PC-9 (cell line): ENCODE measurements at regions of chr6 and their contacts with region 1.

Region 1: DNA sequence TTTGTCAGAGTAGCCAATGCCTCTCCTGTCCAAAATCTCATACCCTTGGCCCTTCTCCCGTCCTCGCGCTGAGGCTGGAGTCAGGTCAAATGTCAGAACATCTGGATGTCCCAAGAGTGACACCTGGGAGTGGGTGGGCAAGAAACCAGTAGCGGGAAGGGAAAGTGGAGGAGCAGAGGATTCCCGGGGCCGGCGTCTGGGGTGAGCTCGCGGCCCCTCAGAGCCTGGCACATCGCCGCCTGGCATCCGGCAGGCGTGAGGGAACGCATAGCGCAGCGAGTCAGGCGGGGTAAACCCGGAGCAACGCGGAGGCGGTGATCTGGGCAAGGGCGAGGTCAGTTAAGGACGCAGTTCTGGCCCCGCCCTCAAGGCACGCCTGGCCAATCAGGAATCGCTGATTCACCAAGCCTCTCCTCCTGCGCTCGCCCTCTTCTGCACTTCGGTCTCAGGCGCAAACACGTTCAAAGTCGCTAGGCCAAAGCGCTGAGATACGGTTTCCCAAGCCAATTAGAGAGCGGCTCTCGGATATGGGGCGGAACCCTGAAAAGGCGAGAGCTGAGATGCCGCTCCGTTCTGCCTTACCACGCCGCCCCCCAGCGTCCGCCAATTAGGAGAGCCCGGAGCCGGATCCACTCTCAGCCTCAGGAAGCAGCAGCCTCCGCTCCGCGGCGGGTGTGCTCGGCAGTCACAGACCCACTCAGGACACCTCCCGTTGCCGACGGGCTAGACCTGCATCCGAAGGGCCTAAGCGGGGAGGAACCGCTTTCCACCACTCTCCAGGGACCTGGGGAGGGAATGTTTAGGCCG is 22.5 kb downstream of the VPS52 start:
- DNase-seq: peak; percentile 95 to 97
- H3K4me3 ChIP-seq: peak overlapping the region; percentile 69
- H3K27ac ChIP-seq: peak overlapping the region; percentile 66
- H3K4me1 ChIP-seq: peaks cover 28% of the 10 kb centered on the region
- H3K27me3 ChIP-seq: peaks cover 16% of the 10 kb centered on the region
- CTCF ChIP-seq: no peak

Region 2: GRCh38 chr6:32838114-32838958 is 410.8 kb before region 1 on chr6 and contains the start of gene TAP2:
- CTCF ChIA-PET with region 1: interaction called, 11 read pairs
- POLR2A ChIA-PET with region 1: no interaction called
- intact Hi-C with region 1: loop called (anchors 1 kb)
- DNase-seq: peak; percentile 79 to 96
- H3K4me3 ChIP-seq: peak within 1 kb of the TSS; percentile 68
- H3K27ac ChIP-seq: peak within 1 kb of the TSS; percentile 21; the same call in 1 of the 2 replicates
- H3K4me1 ChIP-seq: peaks cover 13% of the 10 kb centered on the region
- H3K27me3 ChIP-seq: no peaks in the 10 kb centered on the region
- CTCF ChIP-seq: peak; percentile 93
- total RNA-seq, gene TAP2: 70.6 and 91.2 TPM in 2 replicates

Region 3: DNA sequence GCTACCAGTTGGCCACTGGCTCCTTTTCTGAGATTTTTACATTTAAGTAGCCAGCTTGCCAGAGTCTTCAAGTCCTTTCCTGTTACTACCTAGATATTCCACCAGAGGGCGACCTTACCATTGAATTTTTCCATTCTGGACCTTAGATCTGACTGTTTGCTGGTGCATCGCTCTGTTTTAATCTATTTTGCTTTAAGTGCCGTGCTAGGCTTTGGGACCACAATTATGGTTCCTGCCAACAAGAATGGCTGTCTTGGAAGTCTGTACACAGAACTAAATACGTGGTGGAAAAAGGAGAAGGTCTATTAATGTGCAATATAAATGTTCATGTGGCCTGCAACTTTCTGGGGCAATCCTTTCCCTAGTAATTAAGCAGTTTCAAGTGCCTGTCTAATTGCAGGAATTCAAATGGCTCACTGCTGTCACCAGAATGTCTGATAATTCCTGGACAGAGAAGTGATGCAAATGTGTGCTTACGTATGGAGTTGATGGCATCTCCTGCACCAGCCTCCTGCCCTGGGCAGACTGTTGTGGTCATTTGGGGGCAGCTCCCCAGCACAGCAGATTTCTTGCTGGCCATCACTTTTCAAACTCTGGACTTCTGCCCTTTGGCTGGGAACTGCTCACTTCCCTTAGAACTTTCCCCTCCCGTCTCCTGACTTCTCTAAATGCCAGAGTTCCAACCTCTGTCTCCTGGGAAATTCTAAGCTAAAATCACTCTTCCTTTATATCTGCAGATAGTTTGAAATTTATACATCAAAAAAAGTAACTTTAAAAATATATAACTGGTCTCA is 234.1 kb before region 1 on chr6:
- CTCF ChIA-PET with region 1: interaction called, 3 read pairs
- POLR2A ChIA-PET with region 1: no interaction called
- intact Hi-C with region 1: loop called (anchors 2 kb)
- DNase-seq: peak; percentile 45 to 52
- H3K4me3 ChIP-seq: no peak overlapping the region
- H3K27ac ChIP-seq: no peak overlapping the region
- H3K4me1 ChIP-seq: no peaks in the 10 kb centered on the region
- H3K27me3 ChIP-seq: peaks cover 93% of the 10 kb centered on the region
- CTCF ChIP-seq: peak; percentile 85

Region 4: GRCh38 chr6:33161354-33162331 is 87.5 kb before region 1 on chr6:
- CTCF ChIA-PET with region 1: interaction called, 3 read pairs
- POLR2A ChIA-PET with region 1: no interaction called
- intact Hi-C with region 1: loop called (anchors 5 kb)
- DNase-seq: peak in 1 of 2 experiments; percentile 74
- H3K4me3 ChIP-seq: peak overlapping the region; percentile 60; the same call in 1 of the 2 replicates
- H3K27ac ChIP-seq: no peak overlapping the region
- H3K4me1 ChIP-seq: peaks cover 4% of the 10 kb centered on the region
- H3K27me3 ChIP-seq: peaks cover 40% of the 10 kb centered on the region
- CTCF ChIP-seq: peak; percentile 90

Region 5: GRCh38 chr6:33208091-33208967 is 40.8 kb before region 1 on chr6 and contains the start of gene RING1:
- CTCF ChIA-PET with region 1: interaction called, 10 read pairs
- POLR2A ChIA-PET with region 1: interaction called, 5 read pairs
- intact Hi-C with region 1: no loop called
- DNase-seq: peak in 1 of 2 experiments; percentile 64
- H3K4me3 ChIP-seq: peak within 1 kb of the TSS; percentile 98
- H3K27ac ChIP-seq: peak within 1 kb of the TSS; percentile 62
- H3K4me1 ChIP-seq: peaks cover 29% of the 10 kb centered on the region
- H3K27me3 ChIP-seq: no peaks in the 10 kb centered on the region
- CTCF ChIP-seq: no peak
- total RNA-seq, gene RING1: 18.9 and 19.2 TPM in 2 replicates